A673 (cell line): ENCODE measurements at regions of chr11 and their contacts with region 1.

Region 1: GRCh38 chr11:114400217-114400914 is at the starts of genes C11orf71 and RBM7:
- DNase-seq: peak; percentile 99
- H3K4me3 ChIP-seq: peak within 1 kb of the TSS; percentile 73
- H3K27ac ChIP-seq: peak within 1 kb of the TSS; percentile 95
- H3K4me1 ChIP-seq: peaks cover 12% of the 10 kb centered on the region
- H3K27me3 ChIP-seq: no peaks in the 10 kb centered on the region
- CTCF ChIP-seq: peak; percentile 35; the same call in 1 of the 2 replicates
- total RNA-seq, gene C11orf71: 7.4 and 11.4 TPM in 2 replicates
- total RNA-seq, gene RBM7: 37.0 and 41.1 TPM in 2 replicates

Region 2: GRCh38 chr11:114154271-114155047 is 245.9 kb before region 1 on chr11:
- CTCF ChIA-PET with region 1: no interaction called
- POLR2A ChIA-PET with region 1: no interaction called
- intact Hi-C with region 1: no loop called
- DNase-seq: no peak
- H3K4me3 ChIP-seq: no peak overlapping the region
- H3K27ac ChIP-seq: no peak overlapping the region
- H3K4me1 ChIP-seq: peaks cover 34% of the 10 kb centered on the region
- H3K27me3 ChIP-seq: no peaks in the 10 kb centered on the region
- CTCF ChIP-seq: no peak

Region 3: DNA sequence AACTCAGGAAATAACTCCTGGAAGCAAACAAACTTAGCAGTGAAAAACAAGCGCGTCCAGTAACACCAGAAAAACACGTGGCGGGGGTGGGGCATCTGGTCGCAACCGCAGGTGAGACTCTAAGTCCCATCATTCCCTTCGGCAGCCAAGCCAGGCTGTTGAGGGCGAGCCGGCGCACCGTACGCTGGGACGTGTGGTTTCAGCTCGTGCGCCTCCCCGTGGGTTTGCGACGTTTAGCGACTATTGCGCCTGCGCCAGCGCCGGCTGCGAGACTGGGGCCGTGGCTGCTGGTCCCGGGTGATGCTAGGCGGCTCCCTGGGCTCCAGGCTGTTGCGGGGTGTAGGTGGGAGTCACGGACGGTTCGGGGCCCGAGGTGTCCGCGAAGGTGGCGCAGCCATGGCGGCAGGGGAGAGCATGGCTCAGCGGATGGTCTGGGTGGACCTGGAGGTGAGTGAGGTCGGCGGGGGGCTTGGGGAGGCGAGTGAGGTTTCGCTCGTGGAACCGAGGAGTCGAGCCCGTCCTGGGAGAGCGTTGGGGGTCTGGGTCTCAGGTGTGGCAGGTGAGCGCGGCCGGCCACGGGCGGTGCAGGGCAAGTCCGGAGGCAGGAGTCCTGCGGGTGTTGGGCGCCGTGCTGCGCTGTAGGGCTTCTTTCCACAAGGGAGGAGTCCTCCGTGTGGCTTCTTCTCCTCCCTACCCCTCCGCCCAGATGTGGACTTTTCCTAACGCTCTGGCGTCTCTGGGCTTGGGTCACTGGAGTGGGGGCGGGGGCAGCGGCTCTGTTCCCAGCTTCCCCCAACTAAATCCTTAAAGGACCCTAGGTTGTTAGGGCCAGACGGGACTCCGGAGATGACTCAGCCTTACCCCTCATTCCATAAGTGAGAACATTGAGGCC is 39.1 kb after region 1 on chr11 and contains the start of gene REXO2:
- CTCF ChIA-PET with region 1: no interaction called
- POLR2A ChIA-PET with region 1: no interaction called
- intact Hi-C with region 1: loop called (anchors 5 kb)
- DNase-seq: peak; percentile 99
- H3K4me3 ChIP-seq: peak within 1 kb of the TSS; percentile 74
- H3K27ac ChIP-seq: peak within 1 kb of the TSS; percentile 52
- H3K4me1 ChIP-seq: peaks cover 3% of the 10 kb centered on the region
- H3K27me3 ChIP-seq: no peaks in the 10 kb centered on the region
- CTCF ChIP-seq: peak; percentile 8; the same call in 1 of the 2 replicates
- total RNA-seq, gene REXO2: 119 TPM in 2 replicates